BJ (cell line): ENCODE measurements at regions of chr3 and their contacts with region 1.

Region 1: DNA sequence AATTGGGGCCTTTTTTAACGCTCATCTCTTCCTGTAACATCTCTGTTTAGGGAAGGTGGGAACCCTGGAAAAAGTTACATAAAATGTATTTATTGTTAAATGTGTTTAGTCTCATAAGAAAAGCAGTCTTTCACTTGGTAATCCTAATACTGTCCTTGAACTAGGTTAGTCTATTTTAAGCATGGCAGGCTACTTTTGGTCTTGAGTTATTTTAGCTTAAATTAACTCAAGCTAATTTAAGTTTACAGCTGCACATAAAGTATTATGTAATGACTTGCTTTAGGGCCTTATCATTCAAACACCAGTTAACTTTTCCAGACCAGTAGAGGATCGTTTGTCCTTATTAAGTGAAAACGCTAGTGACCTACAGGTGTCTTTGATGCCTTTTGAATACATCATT is 63.2 kb downstream of the DCUN1D1 start:
- DNase-seq: no peak
- H3K4me3 ChIP-seq: no peak overlapping the region
- H3K27me3 ChIP-seq: no peaks in the 10 kb centered on the region
- CTCF ChIP-seq: no peak

Region 2: DNA sequence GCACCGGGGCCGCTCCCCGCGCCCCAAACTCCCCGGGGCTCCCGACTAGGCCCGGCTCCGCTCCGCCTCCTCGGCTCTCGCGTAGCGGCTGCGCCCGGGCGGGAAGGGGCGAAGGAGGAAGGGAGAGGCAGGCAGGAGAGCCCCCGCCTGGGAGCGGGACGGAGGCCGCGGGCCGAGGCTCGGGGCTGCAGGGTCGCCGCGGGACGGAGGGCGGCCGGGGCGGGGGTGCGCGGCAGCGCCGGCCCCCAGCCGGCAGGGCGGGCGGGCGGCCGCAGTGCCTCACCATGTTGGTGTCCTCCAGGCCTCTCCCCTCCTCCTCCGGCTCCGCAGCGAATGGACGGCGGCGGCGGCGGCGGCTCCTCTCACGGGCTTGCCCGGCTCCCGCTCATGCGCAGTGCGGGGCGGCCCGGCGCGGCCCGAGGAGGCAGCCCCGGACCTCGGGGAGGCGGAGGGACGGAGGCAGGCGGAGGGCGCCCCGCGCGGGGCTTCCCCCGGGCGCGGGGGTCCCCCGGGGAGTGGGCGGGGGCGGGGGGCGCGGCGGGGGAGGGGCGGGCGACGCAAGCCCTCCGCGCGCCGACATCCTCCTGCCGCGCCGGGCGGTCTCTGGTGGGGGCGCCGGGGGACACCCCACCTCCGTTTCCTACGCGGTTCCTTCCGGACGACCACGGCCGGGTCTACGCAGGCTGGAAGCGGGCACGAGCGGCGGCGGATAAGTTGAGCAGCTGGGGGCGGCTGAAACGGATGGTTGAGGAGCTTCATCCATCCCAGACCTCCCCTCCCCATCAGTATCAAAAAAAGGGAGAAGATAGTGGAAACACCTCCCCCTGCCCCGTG is 63.3 kb after region 1 on chr3 and contains the start of gene DCUN1D1:
- CTCF ChIA-PET with region 1: no interaction called
- POLR2A ChIA-PET with region 1: interaction called, 12 read pairs
- DNase-seq: peak; percentile 11
- H3K4me3 ChIP-seq: peak within 1 kb of the TSS; percentile 76
- H3K27me3 ChIP-seq: no peaks in the 10 kb centered on the region
- CTCF ChIP-seq: no peak
- polyA plus RNA-seq, gene DCUN1D1: 6.1 and 28.1 TPM in 2 replicates

Region 3: GRCh38 chr3:183178629-183179549 is 261.8 kb after region 1 on chr3:
- CTCF ChIA-PET with region 1: no interaction called
- POLR2A ChIA-PET with region 1: no interaction called
- DNase-seq: no peak
- H3K4me3 ChIP-seq: peak overlapping the region; percentile 31
- H3K27me3 ChIP-seq: peaks cover 20% of the 10 kb centered on the region
- CTCF ChIP-seq: peak; percentile 9; the same call in 1 of the 2 replicates